A673 (cell line): ENCODE measurements at regions of chr7 and their contacts with region 1.

Region 1: GRCh38 chr7:2354186-2354938 is at the start of gene EIF3B:
- DNase-seq: peak; percentile 96
- H3K4me3 ChIP-seq: peak within 1 kb of the TSS; percentile 98
- H3K27ac ChIP-seq: peak within 1 kb of the TSS; percentile 100
- H3K4me1 ChIP-seq: peaks cover 38% of the 10 kb centered on the region
- H3K27me3 ChIP-seq: no peaks in the 10 kb centered on the region
- CTCF ChIP-seq: no peak
- total RNA-seq, gene EIF3B: 356 and 364 TPM in 2 replicates

Region 2: GRCh38 chr7:1569833-1570633 is 784.3 kb before region 1 on chr7 and contains the start of gene PSMG3:
- CTCF ChIA-PET with region 1: no interaction called
- POLR2A ChIA-PET with region 1: no interaction called
- intact Hi-C with region 1: loop called (anchors 10 kb)
- DNase-seq: peak; percentile 97
- H3K4me3 ChIP-seq: peak within 1 kb of the TSS; percentile 97
- H3K27ac ChIP-seq: peak within 1 kb of the TSS; percentile 95
- H3K4me1 ChIP-seq: peaks cover 35% of the 10 kb centered on the region
- H3K27me3 ChIP-seq: no peaks in the 10 kb centered on the region
- CTCF ChIP-seq: peak; percentile 23; the same call in 1 of the 2 replicates
- total RNA-seq, gene PSMG3: 54.9 and 57.9 TPM in 2 replicates

Region 3: DNA sequence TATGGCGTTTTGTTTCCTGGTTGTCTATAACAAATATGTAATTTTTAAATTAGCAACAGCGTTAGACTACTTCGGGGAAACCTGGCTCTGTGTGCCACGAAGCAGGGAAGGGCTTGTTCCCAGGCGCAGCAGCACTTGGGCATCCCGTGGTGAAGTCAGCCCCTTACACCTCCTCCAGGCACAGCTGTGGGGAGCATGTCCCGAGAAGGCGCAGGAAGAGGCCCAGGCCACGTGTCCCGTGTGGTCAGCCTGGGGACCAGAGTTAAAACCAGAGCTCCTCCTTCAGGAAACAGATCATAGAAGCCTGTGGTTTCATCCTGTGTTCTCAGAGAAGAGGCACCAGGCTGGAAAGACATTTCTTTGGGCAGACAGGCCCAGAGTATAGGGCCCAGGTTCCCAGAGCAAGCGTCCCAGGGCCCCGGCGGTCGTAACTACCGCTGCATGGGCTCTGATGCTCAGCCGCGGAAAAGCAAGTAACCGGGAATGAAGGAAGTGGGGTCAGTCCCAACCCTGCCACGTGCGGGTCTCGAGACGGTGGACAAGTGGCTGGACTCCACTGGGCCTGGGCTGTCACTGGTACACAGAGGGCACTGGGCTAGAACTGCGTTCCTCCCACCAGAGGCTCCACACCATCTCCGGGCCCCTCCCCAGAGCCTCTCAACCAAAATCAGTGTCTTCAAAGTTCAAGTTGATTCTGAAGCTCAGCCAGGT is 105.2 kb before region 1 on chr7:
- CTCF ChIA-PET with region 1: interaction called, 3 read pairs
- POLR2A ChIA-PET with region 1: no interaction called
- intact Hi-C with region 1: loop called (anchors 5 kb)
- DNase-seq: no peak
- H3K4me3 ChIP-seq: no peak overlapping the region
- H3K27ac ChIP-seq: no peak overlapping the region
- H3K4me1 ChIP-seq: no peaks in the 10 kb centered on the region
- H3K27me3 ChIP-seq: no peaks in the 10 kb centered on the region
- CTCF ChIP-seq: no peak